Naive thymus-derived CD8-positive, alpha-beta T cell (primary cell): ENCODE measurements at regions of chr6 and their contacts with region 1.

Region 1: DNA sequence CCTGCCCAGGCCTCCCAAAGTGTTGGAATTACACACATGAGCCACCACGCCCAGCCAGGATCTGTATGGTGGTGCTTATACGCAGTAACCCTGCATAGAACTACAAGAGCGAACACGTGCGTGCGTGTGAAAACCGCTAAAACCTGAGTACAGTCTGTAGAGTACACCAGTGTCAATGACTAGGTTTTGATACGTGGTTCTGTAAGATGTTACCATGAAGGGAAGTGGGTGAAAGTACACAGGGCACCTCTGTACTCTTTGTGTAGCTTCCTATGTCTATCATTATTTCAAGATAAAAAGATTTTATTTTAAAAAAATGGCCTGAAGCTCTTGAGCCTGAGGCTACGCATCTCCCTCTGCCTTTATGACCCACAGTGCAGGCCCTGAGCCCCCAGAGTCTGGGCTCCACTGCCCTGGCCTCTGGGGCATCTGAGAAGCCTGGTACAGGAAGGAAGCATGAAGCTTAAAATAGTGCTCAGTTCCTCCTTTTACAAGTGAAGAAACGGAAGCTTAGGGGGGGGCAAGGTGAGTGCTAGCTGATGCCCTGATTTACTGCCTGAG is 21.6 kb downstream of the LY86 start:
- DNase-seq: peak in 9 of 10 donors; percentile 19 to 84 (median 71)
- ATAC-seq: peak; percentile 75 to 82
- H3K4me3 Mint-ChIP-seq: peak overlapping the region in 9 of 10 donors; percentile 48 to 80 (median 67)
- H3K27ac Mint-ChIP-seq: peak overlapping the region; percentile 80 to 99 (median 98)
- H3K4me1 Mint-ChIP-seq: peaks cover 37 to 72% (median 65%) of the 10 kb centered on the region in 4 donors
- H3K27me3 Mint-ChIP-seq: no peaks in the 10 kb centered on the region

Region 2: DNA sequence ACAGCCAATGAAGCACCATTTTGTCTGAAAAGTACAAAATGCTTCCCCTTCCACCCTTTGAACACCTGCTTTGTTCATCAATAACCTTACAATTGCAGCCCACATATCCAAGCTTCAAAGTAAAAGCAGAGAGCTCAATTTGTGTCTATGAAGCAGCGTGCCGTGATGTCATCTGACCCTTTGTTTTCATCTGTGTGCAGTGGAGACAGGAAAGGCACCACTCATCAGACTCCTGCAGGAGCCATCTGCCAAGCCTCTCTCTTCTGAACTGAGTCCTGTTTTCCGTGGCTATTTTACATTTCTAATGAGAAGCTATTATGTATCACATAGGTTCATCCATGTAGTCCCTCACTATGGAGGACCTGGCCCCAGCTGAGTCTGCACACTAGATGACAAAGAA is 29.1 kb before region 1 on chr6:
- POLR2A ChIA-PET with region 1: interaction called, 11 read pairs
- DNase-seq: peak in 6 of 10 donors; percentile 17 to 62 (median 46)
- ATAC-seq: peak; percentile 92 to 93
- H3K4me3 Mint-ChIP-seq: peak overlapping the region in 1 of 10 donors; percentile 38
- H3K27ac Mint-ChIP-seq: peak overlapping the region in 9 of 10 donors; percentile 33 to 95 (median 90)
- H3K4me1 Mint-ChIP-seq: peaks cover 20 to 48% (median 36%) of the 10 kb centered on the region in 4 donors
- H3K27me3 Mint-ChIP-seq: no peaks in the 10 kb centered on the region

Region 3: GRCh38 chr6:6588064-6588923 is 21.8 kb before region 1 on chr6 and contains the start of gene LY86:
- POLR2A ChIA-PET with region 1: interaction called, 22 read pairs
- DNase-seq: peak in 3 of 10 donors; percentile 45 to 50 (median 49)
- ATAC-seq: peak; percentile 73 to 77
- H3K4me3 Mint-ChIP-seq: peak within 1 kb of the TSS; percentile 77 to 90 (median 81)
- H3K27ac Mint-ChIP-seq: peak within 1 kb of the TSS; percentile 79 to 99 (median 96)
- H3K4me1 Mint-ChIP-seq: peaks cover 39 to 86% (median 76%) of the 10 kb centered on the region in 4 donors
- H3K27me3 Mint-ChIP-seq: no peaks in the 10 kb centered on the region
- polyA plus RNA-seq, gene LY86: 6.0 to 7.0 (median 6.3) TPM

Region 4: GRCh38 chr6:6599468-6599873 is 10.6 kb before region 1 on chr6:
- POLR2A ChIA-PET with region 1: interaction called, 13 read pairs
- DNase-seq: no peak
- ATAC-seq: no peak
- H3K4me3 Mint-ChIP-seq: no peak overlapping the region
- H3K27ac Mint-ChIP-seq: no peak overlapping the region
- H3K4me1 Mint-ChIP-seq: peaks cover 18 to 64% (median 30%) of the 10 kb centered on the region in 4 donors
- H3K27me3 Mint-ChIP-seq: no peaks in the 10 kb centered on the region

Region 5: DNA sequence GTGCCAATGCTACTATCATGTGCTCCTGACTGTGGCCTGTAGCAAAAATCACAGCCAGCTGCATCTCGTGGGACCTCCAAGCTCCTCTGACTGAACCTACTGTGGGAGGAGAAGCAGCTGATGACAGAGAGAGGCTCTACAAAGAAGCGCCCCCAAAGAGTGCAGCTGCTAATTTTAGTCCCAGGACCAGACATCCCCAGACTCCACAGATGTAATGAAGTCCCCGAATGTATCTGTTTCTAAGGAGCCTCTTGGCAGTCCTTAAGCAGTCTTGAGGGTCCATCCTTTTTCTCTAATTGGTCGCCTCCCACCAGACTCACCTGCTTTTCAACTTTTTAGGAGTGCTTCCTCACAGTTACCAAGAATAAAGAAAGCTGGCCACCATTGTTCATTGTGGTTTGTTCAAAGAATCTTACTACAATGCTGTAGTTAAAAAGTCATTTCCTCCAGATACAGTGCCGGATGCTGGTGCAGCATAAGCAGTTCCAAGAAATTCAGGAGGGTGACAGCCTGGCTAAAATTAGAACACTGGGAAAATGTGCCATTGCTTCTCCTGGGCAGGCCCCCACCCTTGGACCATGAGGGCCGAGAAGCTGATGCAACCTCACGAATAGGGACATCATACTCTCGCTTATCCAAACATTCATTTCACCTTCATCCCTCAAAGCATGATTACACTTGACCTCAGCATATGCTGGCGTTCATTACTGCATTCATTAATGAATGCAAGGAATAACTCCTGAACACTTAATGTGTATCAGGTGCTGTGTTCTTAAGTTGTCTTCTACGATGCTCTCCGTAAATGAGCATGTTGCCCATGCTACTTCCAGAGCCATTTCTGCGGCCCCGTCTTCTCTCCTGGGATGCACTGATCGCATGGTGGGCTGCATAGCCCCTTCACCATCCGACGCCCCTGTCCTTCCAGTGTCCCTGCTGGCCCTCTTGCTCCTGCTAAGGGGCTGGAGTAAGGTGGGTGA is 44.8 kb after region 1 on chr6:
- POLR2A ChIA-PET with region 1: interaction called, 80 read pairs
- DNase-seq: peak in 6 of 10 donors; percentile 19 to 77 (median 54)
- ATAC-seq: peak; percentile 48 to 75
- H3K4me3 Mint-ChIP-seq: peak overlapping the region; percentile 44 to 78 (median 74)
- H3K27ac Mint-ChIP-seq: peak overlapping the region in 9 of 10 donors; percentile 84 to 98 (median 94)
- H3K4me1 Mint-ChIP-seq: peaks cover 34 to 88% (median 64%) of the 10 kb centered on the region in 4 donors
- H3K27me3 Mint-ChIP-seq: no peaks in the 10 kb centered on the region

Region 6: DNA sequence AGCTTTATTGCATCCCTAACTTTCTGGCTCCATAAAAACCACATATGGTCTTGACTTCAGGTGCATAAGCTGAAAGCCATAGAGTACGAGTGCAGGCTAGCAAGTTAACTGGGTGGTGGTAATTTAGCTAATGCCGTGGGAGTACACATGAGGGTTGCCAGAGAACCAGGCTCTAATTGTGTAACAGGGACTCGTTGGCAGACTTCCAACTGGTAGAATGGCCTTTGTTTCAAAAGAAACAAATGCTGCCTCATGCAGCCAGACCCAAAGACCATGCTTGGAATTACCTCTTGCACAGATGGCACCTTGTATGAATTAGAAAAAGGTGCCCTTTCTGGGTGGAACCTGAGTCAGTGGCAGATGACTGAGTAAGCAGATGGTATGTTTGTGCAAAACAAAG is 51.6 kb after region 1 on chr6:
- POLR2A ChIA-PET with region 1: interaction called, 80 read pairs
- DNase-seq: no peak
- ATAC-seq: no peak
- H3K4me3 Mint-ChIP-seq: no peak overlapping the region
- H3K27ac Mint-ChIP-seq: peak overlapping the region in 8 of 10 donors; percentile 23 to 98 (median 77)
- H3K4me1 Mint-ChIP-seq: peaks cover 13 to 66% (median 34%) of the 10 kb centered on the region in 4 donors
- H3K27me3 Mint-ChIP-seq: peaks cover 0 to 1% (median 0%) of the 10 kb centered on the region in 5 donors

Region 7: DNA sequence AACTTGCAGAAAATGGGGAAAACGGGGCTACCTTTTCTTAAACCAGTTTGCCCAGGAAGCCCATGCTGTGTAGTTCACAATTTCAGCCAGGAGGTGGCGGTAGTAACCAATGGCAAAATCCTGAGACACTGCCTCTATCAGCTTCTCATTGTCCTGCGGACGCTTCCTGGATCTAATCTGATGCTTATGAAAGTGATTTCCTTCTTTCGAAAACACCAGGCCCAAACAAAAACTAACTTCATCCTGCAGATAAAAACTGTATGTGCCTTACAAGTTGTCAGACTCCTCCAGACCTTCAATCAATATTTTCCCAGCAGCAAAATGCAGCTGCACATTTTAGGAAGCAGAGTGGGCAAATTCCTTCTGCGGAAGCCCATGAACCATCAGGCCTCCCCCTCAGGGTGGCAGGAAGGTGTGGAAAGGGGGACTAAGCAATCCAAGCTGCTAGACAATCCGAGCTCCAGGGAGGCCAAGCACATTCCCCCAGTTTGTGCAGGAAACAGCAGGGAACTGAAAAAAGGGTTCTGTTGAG is 66.9 kb after region 1 on chr6:
- POLR2A ChIA-PET with region 1: no interaction called
- DNase-seq: peak; percentile 54 to 85 (median 75)
- ATAC-seq: peak; percentile 81 to 89
- H3K4me3 Mint-ChIP-seq: peak overlapping the region in 4 of 10 donors; percentile 1 to 49 (median 8)
- H3K27ac Mint-ChIP-seq: peak overlapping the region in 8 of 10 donors; percentile 10 to 93 (median 57)
- H3K4me1 Mint-ChIP-seq: peaks cover 5 to 9% (median 8%) of the 10 kb centered on the region in 4 donors
- H3K27me3 Mint-ChIP-seq: peaks cover 0 to 4% (median 0%) of the 10 kb centered on the region in 5 donors